ENCODE measurements at regions of chr15 and their contacts with region 1.

Region 1: DNA sequence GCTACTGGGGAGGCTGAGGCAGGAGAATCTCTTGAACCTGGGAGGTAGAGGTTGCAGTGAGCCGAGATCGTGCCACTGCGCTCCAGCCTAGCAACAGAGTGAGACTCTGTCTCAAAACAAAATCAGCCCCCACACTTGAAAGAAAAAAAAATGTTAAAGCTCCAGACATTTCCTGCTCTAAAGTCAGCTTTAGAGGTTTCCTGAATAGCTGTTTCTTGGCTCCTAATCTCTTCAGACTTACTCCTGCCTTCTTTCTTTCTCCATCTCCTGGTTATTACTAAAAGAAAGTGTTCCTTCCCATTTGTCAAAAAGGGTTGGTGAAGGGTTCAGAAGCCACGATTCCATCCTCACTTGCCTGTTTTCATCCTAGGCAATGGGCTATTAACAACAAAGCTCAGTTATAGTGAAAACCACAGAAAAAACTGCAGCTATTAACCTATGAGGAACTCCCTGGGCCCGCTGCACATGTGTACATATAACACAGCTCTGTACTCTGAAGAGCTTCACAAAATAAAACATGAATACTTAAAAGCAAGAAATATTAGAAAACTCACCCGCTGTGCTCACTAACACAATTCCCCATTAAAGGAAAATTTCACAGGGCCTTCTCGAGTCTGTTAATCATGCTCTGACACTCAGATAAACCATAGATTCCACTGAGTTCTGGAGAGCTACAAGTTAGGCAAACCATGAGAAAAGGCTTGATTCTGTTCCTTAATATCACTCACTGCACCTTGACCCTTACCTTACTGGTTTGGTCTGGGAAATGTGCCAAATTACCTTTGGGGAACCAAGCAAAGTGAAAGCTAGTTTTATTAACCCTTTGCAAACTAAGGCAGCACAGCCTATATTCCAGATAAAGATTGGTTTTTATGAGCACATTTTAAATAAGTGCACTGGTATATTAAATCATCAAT is 89.9 kb upstream of the TSPAN3 start:
- DNase-seq: peak; percentile 73
- H3K4me3 ChIP-seq: no peak overlapping the region
- H3K27ac ChIP-seq: peak overlapping the region; percentile 27
- H3K4me1 ChIP-seq: peaks cover 21% of the 10 kb centered on the region
- H3K27me3 ChIP-seq: no peaks in the 10 kb centered on the region
- CTCF ChIP-seq: no peak
- POLR2A ChIP-seq: no peak

Region 2: DNA sequence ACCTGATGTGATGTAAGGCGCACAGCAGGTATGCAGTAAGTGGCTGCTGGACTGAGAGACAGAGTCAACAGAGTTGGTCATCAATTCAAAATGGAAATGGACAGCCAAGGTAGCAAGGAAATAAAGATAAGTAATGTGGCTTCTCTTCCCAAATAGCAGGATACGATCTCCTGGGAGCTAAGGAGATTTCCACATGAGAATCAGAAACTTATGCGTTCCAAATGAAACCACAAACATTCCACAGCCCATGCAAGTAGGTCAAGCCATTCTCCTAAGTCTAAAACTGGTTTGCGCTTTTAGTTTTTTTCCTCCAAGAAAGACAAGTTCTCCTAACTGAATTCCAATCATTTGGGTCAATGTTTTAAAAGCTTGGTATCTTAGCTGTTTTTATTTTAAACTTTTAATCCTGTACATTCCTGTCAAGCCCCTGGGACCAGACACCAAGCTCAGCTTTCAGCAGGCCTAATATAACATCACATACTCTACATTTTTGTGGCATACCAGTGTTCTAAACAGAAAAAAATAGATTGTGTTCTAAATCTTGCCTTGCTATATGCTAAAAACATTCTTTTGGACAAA is 16.2 kb before region 1 on chr15:
- CTCF ChIA-PET with region 1: interaction called, 16 read pairs
- POLR2A ChIA-PET with region 1: interaction called, 4 read pairs
- dilution Hi-C with region 1: no loop called
- intact Hi-C with region 1: no loop called
- DNase-seq: no peak
- H3K4me3 ChIP-seq: no peak overlapping the region
- H3K27ac ChIP-seq: peak overlapping the region; percentile 45
- H3K4me1 ChIP-seq: peaks cover 19% of the 10 kb centered on the region
- H3K27me3 ChIP-seq: no peaks in the 10 kb centered on the region
- CTCF ChIP-seq: no peak
- POLR2A ChIP-seq: no peak

Region 3: DNA sequence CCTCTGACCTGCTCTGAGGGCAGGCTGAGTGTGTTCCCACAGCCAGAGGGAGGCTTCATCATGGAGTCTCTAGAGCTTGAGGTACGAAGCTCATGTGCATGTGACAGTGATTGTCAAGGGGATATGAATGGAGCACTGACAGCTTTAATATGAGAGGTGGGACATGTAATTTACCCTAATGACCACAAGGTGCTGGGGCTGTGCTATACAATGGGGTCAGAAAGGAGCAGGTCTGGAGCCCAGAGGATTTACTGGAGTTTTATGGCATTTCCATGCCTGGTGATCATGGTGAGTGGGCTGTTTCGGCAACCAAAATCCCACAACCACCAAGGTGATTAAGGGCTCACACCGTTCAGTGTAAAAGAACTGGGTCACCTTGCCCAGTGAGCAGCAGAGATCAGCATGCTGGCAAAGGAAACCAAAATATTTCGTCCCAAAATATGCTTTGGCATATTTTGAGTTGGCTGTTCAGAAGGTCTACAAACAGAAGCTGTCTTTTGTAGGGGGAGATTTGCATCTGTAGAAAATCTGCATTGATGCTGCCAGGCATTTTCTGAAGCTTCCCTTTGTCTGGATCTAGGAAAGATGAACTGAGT is 1969.8 kb after region 1 on chr15:
- CTCF ChIA-PET with region 1: no interaction called
- POLR2A ChIA-PET with region 1: no interaction called
- dilution Hi-C with region 1: no loop called
- intact Hi-C with region 1: no loop called
- DNase-seq: no peak
- H3K4me3 ChIP-seq: no peak overlapping the region
- H3K27ac ChIP-seq: no peak overlapping the region
- H3K4me1 ChIP-seq: no peaks in the 10 kb centered on the region
- H3K27me3 ChIP-seq: no peaks in the 10 kb centered on the region
- CTCF ChIP-seq: no peak
- POLR2A ChIP-seq: no peak